ENCODE measurements at regions of chr4 and their contacts with region 1.

Region 1: DNA sequence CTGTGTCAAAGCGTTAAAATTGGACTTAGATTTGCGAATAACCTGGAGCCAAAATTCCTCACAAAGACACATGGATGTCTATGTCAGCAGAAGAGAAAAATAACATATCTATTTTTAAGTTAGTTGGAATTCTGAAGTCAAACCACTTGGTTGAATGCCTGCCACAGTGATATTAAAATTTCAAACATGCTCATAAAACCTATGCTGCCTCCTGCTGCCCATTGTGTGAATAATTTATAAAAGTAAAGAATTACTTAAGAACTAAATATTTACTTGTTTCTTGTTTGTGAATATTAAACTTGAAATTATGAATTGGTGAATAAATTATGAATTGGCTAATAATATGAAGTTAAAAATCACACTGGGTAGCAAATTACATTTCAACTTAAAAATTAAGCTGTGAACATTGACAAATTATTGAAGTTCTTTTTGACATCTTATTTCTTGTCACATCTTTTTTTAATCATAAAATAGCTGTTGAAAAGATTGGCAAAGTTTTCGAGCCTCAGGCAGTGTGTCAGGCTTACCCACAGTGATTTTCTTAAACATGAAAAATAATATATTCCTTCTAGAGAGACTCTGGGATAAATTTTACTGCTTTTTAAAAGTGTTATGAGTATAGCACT is 35.4 kb downstream of the FABP2 start:
- DNase-seq: peak in 2 of 5 donors; percentile 35 to 51
- H3K4me3 ChIP-seq: no peak overlapping the region
- H3K27ac ChIP-seq: no peak overlapping the region
- H3K4me1 ChIP-seq: no peaks in the 10 kb centered on the region
- H3K27me3 ChIP-seq: no peaks in the 10 kb centered on the region
- CTCF ChIP-seq: peak; percentile 28 to 85 (median 70)
- EP300 ChIP-seq: no peak
- POLR2A ChIP-seq: no peak

Region 2: GRCh38 chr4:117412661-117413060 is 1873.8 kb before region 1 on chr4:
- intact Hi-C with region 1: no loop called
- DNase-seq: no peak
- H3K4me3 ChIP-seq: no peak overlapping the region
- H3K27ac ChIP-seq: no peak overlapping the region
- H3K4me1 ChIP-seq: no peaks in the 10 kb centered on the region
- H3K27me3 ChIP-seq: no peaks in the 10 kb centered on the region
- CTCF ChIP-seq: no peak
- EP300 ChIP-seq: no peak
- POLR2A ChIP-seq: no peak

Region 3: DNA sequence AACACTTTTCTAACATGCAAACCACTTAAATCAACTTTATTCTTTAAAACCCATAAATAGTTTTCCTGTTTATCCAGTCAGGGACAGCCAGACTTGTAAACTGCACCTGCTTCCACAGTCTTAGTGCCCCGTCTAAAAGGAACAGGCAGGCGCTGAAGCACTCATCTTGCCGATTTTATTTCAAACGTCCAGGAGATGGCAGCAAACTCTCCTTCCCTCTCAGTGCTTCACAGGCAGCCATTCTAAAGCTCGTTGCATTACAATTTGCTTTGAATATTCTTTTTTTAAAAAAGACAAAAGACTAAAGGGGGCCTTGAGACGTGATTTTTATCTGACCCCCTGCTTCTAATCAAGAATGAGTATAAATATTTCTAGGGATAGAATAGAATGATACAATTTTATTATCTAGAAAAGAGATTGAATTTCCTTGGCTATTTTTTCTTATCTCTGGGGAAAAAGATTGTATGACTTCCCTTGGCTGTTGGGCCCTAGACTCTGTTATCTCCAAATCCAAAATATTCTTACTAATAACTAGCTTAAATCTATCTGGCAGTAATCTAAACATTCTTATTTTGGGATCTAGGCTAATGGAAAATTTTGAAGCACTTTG is 244.4 kb before region 1 on chr4:
- intact Hi-C with region 1: loop called in 2 of 4 experiments (anchors 5 kb)
- DNase-seq: peak in 3 of 5 donors; percentile 29 to 72 (median 35)
- H3K4me3 ChIP-seq: no peak overlapping the region
- H3K27ac ChIP-seq: peak overlapping the region in 1 of 2 donors; percentile 63
- H3K4me1 ChIP-seq: peaks cover 15% of the 10 kb centered on the region
- H3K27me3 ChIP-seq: no peaks in the 10 kb centered on the region
- CTCF ChIP-seq: peak in 2 of 3 donors; percentile 53 to 57
- EP300 ChIP-seq: no peak
- POLR2A ChIP-seq: no peak

Region 4: GRCh38 chr4:119184128-119184527 is 102.4 kb before region 1 on chr4:
- intact Hi-C with region 1: no loop called
- DNase-seq: no peak
- H3K4me3 ChIP-seq: no peak overlapping the region
- H3K27ac ChIP-seq: no peak overlapping the region
- H3K4me1 ChIP-seq: no peaks in the 10 kb centered on the region
- H3K27me3 ChIP-seq: no peaks in the 10 kb centered on the region
- CTCF ChIP-seq: no peak
- EP300 ChIP-seq: no peak
- POLR2A ChIP-seq: no peak

Region 5: DNA sequence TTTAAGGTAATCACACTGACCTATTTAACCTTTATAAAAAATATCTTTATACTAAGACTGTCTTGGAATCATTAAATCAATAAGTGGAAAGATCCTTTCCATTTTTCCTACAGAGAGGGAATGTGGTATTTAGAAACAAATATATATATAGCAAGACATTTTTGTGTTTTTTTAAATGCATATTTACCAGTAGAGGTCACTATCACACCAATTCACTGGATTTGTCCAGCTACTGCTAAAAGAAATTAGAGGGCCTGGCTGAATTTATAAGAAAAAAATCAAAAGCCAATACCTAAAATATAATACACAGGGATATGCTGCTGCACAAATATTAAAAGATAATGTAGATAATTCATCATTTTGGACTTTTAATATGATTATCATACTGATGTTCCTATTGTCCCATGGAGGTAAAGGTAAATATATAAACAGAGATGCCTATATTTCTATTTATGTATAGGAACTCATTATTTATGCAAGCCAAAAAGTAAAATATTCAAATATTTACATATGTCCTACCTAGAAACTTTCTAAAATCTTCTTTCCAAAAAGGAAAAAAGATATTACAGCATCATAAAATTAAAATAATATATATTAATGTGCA is 272.7 kb after region 1 on chr4:
- intact Hi-C with region 1: no loop called
- DNase-seq: no peak
- H3K4me3 ChIP-seq: no peak overlapping the region
- H3K27ac ChIP-seq: no peak overlapping the region
- H3K4me1 ChIP-seq: no peaks in the 10 kb centered on the region
- H3K27me3 ChIP-seq: no peaks in the 10 kb centered on the region
- CTCF ChIP-seq: peak in 1 of 3 donors; percentile 33
- EP300 ChIP-seq: no peak
- POLR2A ChIP-seq: no peak

Region 6: DNA sequence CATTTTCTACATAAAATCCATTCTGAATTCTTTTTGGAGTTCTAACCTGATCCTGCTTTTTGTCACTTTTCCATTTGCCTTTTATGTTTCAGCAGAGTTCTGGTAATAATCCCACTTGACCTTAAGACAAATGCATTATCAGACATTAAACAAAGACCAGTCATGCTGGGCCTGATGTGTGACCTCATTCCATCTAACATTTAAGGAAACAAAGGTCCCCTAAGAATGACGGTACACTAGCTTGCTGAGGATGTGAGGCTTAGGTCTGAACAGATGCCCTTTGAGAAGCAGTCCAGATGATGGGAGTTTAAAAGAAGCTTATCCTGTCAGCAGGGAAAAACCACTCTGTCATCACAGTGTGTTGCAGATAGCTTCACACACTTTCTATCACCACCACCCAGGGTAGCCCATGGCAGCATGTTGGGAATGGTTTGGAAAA is 380.2 kb after region 1 on chr4:
- intact Hi-C with region 1: no loop called
- DNase-seq: no peak
- H3K4me3 ChIP-seq: no peak overlapping the region
- H3K27ac ChIP-seq: no peak overlapping the region
- H3K4me1 ChIP-seq: no peaks in the 10 kb centered on the region
- H3K27me3 ChIP-seq: no peaks in the 10 kb centered on the region
- CTCF ChIP-seq: no peak
- EP300 ChIP-seq: no peak
- POLR2A ChIP-seq: no peak